AG04450 (cell line): ENCODE measurements at regions of chr9 and their contacts with region 1.

Region 1: DNA sequence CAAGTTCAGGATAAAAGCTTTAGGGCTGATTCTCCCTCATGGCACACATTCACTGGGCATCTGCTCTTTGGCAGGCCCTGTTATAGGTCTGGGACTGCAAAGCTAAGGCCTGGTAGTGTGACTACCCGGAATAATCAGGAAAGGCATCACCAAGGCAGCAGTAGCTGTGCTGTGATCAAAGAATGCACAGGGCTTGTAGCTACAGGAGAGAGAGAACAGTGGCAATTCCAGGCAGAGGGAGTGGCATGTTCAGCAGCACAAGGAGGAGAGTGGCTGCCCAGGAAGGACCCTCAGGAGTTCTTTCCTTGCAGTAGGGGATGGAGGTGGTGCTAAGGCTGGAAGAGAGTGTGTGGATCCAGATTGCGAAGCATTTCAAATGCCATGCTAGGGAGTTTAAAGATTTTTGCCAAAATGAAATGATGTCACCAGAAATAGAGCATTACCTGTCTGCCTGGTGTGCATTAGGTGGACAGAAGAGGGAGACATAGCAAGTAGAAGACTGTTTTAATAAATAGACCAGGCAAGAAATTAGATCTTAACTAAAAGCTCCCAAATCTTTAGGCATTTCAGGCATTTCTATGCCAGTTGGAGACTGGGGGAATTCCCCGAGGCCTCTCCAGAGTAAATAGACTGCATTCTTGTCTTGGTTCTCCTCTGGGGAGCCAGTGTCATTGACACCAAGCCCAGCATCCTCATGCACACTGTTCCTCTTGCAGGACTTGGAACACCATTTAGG is 69.1 kb downstream of the GPR21 start:
- DNase-seq: peak; percentile 1
- H3K4me3 ChIP-seq: no peak overlapping the region
- H3K27ac ChIP-seq: no peak overlapping the region
- H3K27me3 ChIP-seq: no peaks in the 10 kb centered on the region
- CTCF ChIP-seq: peak; percentile 51

Region 2: DNA sequence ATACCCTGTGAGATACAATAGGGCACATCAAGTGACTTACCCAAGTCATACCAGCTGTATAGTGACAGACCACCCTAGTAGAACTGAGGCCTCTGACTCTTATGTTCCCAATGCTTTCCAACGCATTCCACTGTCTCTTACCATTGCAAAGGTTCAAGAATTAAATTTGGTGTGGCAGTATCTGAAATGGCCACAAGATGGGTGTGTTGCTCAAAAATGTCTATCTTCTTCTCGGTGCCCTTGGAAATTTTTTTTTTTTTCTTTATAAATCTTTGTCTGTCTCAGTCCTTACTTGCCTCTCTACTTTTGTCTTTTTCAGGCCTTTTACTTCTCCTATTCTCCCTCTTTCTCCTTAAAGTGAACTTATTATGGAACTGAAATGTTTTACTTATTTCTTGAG is 20.7 kb before region 1 on chr9:
- CTCF ChIA-PET with region 1: interaction called, 17 read pairs
- POLR2A ChIA-PET with region 1: no interaction called
- DNase-seq: no peak
- H3K4me3 ChIP-seq: no peak overlapping the region
- H3K27ac ChIP-seq: no peak overlapping the region
- H3K27me3 ChIP-seq: no peaks in the 10 kb centered on the region
- CTCF ChIP-seq: peak; percentile 70

Region 3: GRCh38 chr9:123091459-123091858 is 11.1 kb before region 1 on chr9:
- CTCF ChIA-PET with region 1: interaction called, 18 read pairs
- POLR2A ChIA-PET with region 1: no interaction called
- DNase-seq: no peak
- H3K4me3 ChIP-seq: no peak overlapping the region
- H3K27ac ChIP-seq: no peak overlapping the region
- H3K27me3 ChIP-seq: no peaks in the 10 kb centered on the region
- CTCF ChIP-seq: peak; percentile 4; the same call in 1 of the 2 replicates

Region 4: GRCh38 chr9:123225374-123225813 is 122.9 kb after region 1 on chr9:
- CTCF ChIA-PET with region 1: interaction called, 41 read pairs
- POLR2A ChIA-PET with region 1: interaction called, 4 read pairs
- DNase-seq: peak; percentile 47
- H3K4me3 ChIP-seq: no peak overlapping the region
- H3K27ac ChIP-seq: no peak overlapping the region
- H3K27me3 ChIP-seq: no peaks in the 10 kb centered on the region
- CTCF ChIP-seq: peak; percentile 69

Region 5: DNA sequence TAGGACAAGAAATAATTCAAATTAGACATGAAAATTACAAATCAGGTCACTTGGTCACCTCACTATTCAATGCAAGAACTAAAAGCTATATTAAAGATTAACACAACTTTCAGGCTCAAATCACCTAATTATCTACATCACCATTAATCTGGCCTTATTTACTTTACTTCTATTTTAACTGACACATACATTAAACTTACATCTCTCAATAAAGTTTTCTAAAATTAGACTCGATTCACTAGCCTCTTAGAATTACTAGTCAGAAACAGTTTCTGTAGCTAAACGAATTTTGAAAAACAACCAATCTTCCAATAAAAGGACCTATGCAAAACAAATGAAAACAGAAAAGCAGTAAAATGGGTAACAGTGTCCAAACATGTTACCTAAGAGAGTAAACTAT is 160.2 kb after region 1 on chr9:
- CTCF ChIA-PET with region 1: interaction called, 10 read pairs
- POLR2A ChIA-PET with region 1: no interaction called
- DNase-seq: no peak
- H3K4me3 ChIP-seq: no peak overlapping the region
- H3K27ac ChIP-seq: no peak overlapping the region
- H3K27me3 ChIP-seq: peaks cover 18% of the 10 kb centered on the region
- CTCF ChIP-seq: no peak